Posterior vena cava (tissue), 2 donors: ENCODE measurements at regions of chrX and their contacts with region 1.

Region 1: GRCh38 chrX:118603981-118604380 is 108.4 kb downstream of the DOCK11 start:
- DNase-seq: no peak

Region 2: GRCh38 chrX:118459494-118459893 is 144.5 kb before region 1 on chrX:
- intact Hi-C with region 1: loop called (anchors 5 to 10 kb)
- DNase-seq: no peak

Region 3: GRCh38 chrX:118464501-118464900 is 139.5 kb before region 1 on chrX:
- intact Hi-C with region 1: loop called (anchors 5 to 10 kb)
- DNase-seq: no peak

Region 4: DNA sequence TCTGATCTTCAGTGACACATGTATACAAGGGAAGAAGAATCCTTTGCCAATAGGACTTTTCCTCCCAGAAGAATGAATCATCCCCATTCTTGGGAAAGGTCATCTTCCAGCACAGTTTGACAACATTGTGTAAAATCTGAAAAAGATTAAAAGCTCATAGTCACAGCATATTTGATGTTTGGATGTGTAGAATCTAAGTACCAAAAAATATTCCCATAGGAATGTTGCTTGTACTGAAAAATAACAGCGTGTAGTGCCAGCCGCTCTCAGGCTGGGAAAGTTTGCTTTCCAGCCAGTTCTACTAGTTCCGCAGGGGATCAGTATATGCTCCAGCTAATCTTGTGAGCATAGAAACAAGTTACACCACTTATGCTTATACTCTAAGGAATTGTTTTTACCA is 48.7 kb after region 1 on chrX:
- intact Hi-C with region 1: no loop called
- DNase-seq: no peak